PC-9 (cell line): ENCODE measurements at regions of chr12 and their contacts with region 1.

Region 1: DNA sequence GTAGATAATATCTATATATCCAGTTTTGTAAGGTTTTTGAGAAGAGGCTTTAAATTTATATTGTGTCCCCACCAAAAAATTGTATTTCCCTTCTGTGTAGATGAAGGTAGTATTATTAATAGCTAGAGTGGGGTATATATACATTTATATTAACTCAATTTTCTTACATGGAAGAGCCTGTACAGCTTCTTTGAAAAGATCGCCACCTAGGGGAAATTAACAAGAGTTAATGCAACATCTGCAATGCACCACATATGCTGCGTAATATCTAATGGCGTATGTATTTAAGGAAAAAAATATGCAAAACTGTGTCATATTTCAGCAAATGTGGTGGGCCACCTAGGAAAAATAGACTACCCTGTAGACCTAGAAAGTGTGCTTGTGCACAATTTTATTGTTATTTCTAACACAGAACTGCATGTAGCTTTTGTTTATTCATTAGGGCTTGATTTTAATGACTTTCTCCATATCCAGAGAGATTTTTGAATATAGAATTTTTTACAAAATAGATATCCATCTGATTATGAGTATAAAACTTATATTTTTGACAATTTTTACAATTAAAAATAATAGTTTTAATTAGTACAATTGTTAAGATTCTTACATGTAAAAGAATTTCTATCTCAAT is 14.0 kb downstream of the CCER1 start:
- DNase-seq: peak in 1 of 2 experiments; percentile 48
- H3K4me3 ChIP-seq: no peak overlapping the region
- H3K27ac ChIP-seq: no peak overlapping the region
- H3K4me1 ChIP-seq: peaks cover 16% of the 10 kb centered on the region
- H3K27me3 ChIP-seq: no peaks in the 10 kb centered on the region
- CTCF ChIP-seq: peak; percentile 83

Region 2: DNA sequence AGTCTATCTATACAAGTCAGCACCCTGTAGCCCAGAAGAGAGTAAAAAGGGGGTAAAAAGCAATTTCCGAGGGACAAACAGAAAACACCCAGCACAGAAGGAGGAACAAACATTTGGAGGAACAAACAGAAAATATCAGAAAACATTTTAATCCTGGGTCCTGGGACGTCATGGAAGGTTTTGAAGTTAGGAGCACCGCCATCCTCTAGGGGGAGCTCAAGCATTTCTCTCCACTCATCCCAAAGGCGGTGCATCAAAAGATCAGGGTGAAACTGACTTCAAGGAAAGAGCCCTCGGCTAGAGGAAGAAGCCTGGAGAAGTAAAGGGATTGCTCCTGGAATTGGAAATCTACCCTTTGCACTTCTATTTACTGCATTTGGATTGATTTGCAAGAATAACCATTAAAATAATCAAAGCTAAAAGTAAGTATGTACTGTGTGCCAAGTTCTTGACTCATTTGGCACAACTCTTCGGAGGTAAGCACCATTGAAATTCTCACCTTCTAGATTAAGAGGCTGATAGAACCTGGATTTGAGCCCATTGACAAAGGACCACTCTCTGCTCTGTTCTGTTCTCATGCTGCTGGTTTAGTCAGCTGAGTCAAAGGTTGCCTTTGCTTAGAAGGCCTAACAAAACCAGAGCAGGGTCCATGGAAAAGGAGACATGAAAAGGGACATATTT is 1397.9 kb before region 1 on chr12:
- CTCF ChIA-PET with region 1: no interaction called
- POLR2A ChIA-PET with region 1: no interaction called
- intact Hi-C with region 1: loop called (anchors 2 kb)
- DNase-seq: peak; percentile 60 to 62
- H3K4me3 ChIP-seq: no peak overlapping the region
- H3K27ac ChIP-seq: no peak overlapping the region
- H3K4me1 ChIP-seq: no peaks in the 10 kb centered on the region
- H3K27me3 ChIP-seq: no peaks in the 10 kb centered on the region
- CTCF ChIP-seq: peak; percentile 92

Region 3: GRCh38 chr12:90854136-90854689 is 86.8 kb before region 1 on chr12:
- CTCF ChIA-PET with region 1: no interaction called
- POLR2A ChIA-PET with region 1: no interaction called
- intact Hi-C with region 1: loop called (anchors 10 kb)
- DNase-seq: no peak
- H3K4me3 ChIP-seq: no peak overlapping the region
- H3K27ac ChIP-seq: no peak overlapping the region
- H3K4me1 ChIP-seq: no peaks in the 10 kb centered on the region
- H3K27me3 ChIP-seq: no peaks in the 10 kb centered on the region
- CTCF ChIP-seq: peak; percentile 84

Region 4: GRCh38 chr12:91355150-91356006 is 414.4 kb after region 1 on chr12:
- CTCF ChIA-PET with region 1: interaction called, 4 read pairs
- POLR2A ChIA-PET with region 1: no interaction called
- intact Hi-C with region 1: loop called (anchors 1 kb)
- DNase-seq: peak; percentile 44 to 55
- H3K4me3 ChIP-seq: no peak overlapping the region
- H3K27ac ChIP-seq: no peak overlapping the region
- H3K4me1 ChIP-seq: no peaks in the 10 kb centered on the region; the same call in 1 of the 2 replicates
- H3K27me3 ChIP-seq: no peaks in the 10 kb centered on the region
- CTCF ChIP-seq: peak; percentile 86